ENCODE measurements at regions of chr1 and their contacts with region 1.

Region 1: DNA sequence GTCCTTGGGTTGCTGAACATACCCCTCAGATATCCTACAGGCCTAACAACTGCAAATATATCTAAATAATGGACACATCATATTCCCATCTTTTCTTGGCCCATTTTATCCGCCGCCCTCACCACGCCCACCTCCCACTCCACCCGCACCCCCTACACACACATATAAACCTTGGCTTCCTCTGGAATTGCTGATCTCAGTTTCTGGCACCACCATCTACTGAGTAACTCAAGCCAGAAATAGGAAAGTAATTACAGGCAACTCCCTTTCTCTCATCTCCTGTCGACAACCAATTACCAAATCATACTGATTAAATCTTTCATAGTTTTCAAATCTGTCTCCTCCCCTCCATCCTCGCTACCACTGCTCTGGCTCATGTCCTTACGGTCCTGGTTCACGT is 4.7 kb downstream of the RGS8 start:
- DNase-seq: no peak

Region 2: GRCh38 chr1:182642461-182642860 is 37.2 kb before region 1 on chr1:
- intact Hi-C with region 1: loop called in 1 of 2 experiments (anchors 1 kb)
- DNase-seq: no peak

Region 3: GRCh38 chr1:182974506-182975191 is 295.0 kb after region 1 on chr1:
- intact Hi-C with region 1: no loop called
- DNase-seq: no peak